ENCODE measurements at regions of chr9 and their contacts with region 1.

Region 1: GRCh38 chr9:27276193-27277030 is 20.5 kb downstream of the EQTN start:
- DNase-seq: peak; percentile 70
- H3K4me3 Mint-ChIP-seq: peak overlapping the region; percentile 2
- H3K27ac Mint-ChIP-seq: peak overlapping the region; percentile 57
- H3K4me1 Mint-ChIP-seq: peaks cover 10% of the 10 kb centered on the region
- H3K27me3 Mint-ChIP-seq: no peaks in the 10 kb centered on the region
- CTCF ChIP-seq: peak; percentile 60

Region 2: DNA sequence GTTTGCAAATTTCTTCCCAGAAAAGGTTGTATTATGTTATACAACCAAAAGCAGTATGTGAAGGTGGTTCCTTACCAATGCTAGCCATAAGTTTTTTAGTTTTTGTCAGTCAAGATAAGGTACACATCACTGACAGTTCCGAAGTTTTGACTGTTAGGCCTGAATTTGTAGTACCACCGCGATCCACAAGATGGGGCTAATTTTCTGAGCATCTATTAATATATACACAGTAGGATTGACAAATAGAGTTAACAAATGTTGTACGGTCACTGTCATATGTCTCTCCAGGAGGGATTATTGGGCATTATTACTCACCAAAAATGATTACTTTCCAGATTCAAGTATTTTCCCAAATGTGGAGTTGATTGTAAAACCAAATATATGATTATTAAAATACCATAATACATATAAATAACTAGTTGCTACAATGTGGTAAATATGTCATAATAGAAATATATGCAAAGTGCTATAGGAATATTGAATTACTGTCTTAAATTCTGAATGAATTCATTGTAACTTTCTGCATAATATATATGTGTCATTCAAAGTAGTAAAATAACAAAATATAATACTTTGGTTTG is 242.5 kb before region 1 on chr9:
- CTCF ChIA-PET with region 1: interaction called, 56 read pairs
- POLR2A ChIA-PET with region 1: no interaction called
- intact Hi-C with region 1: loop called (anchors 1 kb)
- DNase-seq: peak; percentile 71
- H3K4me3 Mint-ChIP-seq: no peak overlapping the region
- H3K27ac Mint-ChIP-seq: no peak overlapping the region
- H3K4me1 Mint-ChIP-seq: peaks cover 6% of the 10 kb centered on the region
- H3K27me3 Mint-ChIP-seq: no peaks in the 10 kb centered on the region
- CTCF ChIP-seq: peak; percentile 64

Region 3: DNA sequence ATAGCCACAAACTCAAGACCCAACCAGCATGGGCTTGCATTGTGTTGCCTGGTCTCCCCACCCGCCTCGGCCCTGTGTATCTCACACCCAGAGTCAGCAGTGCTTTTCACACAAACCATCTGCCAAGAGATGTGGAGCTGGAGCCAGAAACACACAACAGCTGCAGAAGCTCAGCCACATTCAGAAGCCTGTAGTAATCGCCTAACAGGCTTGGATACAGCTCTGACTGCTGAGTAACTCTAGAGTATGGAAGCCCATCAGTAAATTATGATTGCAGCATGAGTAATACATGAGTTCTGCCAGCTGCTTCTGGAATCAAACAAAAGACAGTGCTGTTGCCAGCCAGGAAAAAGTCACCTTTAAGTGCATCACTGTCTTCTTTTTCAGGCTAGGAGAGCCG is 151.4 kb before region 1 on chr9:
- CTCF ChIA-PET with region 1: interaction called, 3 read pairs
- POLR2A ChIA-PET with region 1: no interaction called
- intact Hi-C with region 1: loop called (anchors 10 kb)
- DNase-seq: peak; percentile 93
- H3K4me3 Mint-ChIP-seq: no peak overlapping the region
- H3K27ac Mint-ChIP-seq: peak overlapping the region; percentile 78
- H3K4me1 Mint-ChIP-seq: peaks cover 43% of the 10 kb centered on the region
- H3K27me3 Mint-ChIP-seq: no peaks in the 10 kb centered on the region
- CTCF ChIP-seq: no peak

Region 4: GRCh38 chr9:27194401-27195091 is 81.9 kb before region 1 on chr9:
- CTCF ChIA-PET with region 1: no interaction called
- POLR2A ChIA-PET with region 1: no interaction called
- intact Hi-C with region 1: loop called (anchors 1 kb)
- DNase-seq: peak; percentile 82
- H3K4me3 Mint-ChIP-seq: peak overlapping the region; percentile 13
- H3K27ac Mint-ChIP-seq: peak overlapping the region; percentile 84
- H3K4me1 Mint-ChIP-seq: peaks cover 36% of the 10 kb centered on the region
- H3K27me3 Mint-ChIP-seq: no peaks in the 10 kb centered on the region
- CTCF ChIP-seq: no peak

Region 5: DNA sequence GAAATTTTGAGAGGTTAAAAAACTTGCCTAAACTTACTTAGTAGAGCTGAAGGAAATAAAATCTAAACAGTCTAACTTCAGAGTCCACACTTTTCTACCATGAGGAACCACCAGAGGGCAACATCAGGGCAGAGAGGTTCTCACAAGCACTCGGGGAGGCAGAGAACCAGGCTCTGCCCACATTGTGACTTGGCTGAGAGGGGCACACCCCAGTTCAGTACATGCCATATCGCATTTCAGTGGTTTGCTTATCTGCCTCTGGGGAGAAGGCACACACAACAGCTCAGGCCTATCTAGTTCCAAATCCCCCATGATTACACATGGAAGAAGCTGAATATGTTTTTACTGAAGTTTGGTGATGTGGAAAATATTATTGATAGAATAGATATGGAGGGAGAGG is 28.7 kb before region 1 on chr9:
- CTCF ChIA-PET with region 1: interaction called, 14 read pairs
- POLR2A ChIA-PET with region 1: no interaction called
- intact Hi-C with region 1: loop called (anchors 1 kb)
- DNase-seq: peak; percentile 68
- H3K4me3 Mint-ChIP-seq: no peak overlapping the region
- H3K27ac Mint-ChIP-seq: peak overlapping the region; percentile 38
- H3K4me1 Mint-ChIP-seq: peaks cover 15% of the 10 kb centered on the region
- H3K27me3 Mint-ChIP-seq: no peaks in the 10 kb centered on the region
- CTCF ChIP-seq: peak; percentile 30

Region 6: DNA sequence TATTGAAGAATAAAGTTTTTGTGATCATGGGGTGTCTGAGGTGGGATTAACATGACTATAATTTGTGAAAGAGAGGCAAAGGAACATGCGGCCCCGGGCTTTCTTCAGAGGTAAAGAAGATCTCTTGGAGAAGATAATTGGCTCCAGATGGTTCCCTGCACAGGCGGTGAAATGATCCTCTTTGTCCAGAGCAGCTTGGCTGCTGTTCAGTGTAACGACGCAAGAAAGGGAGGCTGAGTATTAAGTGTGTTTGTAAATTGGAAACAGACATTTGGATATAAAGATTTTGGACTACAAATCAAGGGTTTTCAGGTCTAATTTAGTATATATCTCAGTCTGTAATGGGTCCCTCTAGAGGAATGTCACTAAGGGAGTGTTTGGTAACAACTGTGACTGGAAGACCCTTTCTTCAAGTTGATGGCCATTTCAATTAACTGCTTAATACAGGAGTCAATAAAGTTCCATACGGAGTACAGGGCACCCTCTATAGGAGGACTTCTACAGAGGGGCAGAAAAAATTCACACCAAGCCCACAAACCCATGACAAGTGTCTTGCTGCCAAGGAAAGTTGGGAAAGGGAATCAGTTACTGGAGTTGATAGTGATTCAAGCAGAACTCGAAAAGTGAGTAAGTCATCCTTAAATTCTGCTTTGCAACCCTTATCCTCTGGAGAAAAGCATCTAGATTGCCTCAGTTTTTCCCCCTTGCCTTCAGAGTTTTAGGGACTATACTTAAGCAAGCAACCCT is 16.4 kb after region 1 on chr9:
- CTCF ChIA-PET with region 1: interaction called, 14 read pairs
- POLR2A ChIA-PET with region 1: no interaction called
- intact Hi-C with region 1: no loop called
- DNase-seq: no peak
- H3K4me3 Mint-ChIP-seq: no peak overlapping the region
- H3K27ac Mint-ChIP-seq: peak overlapping the region; percentile 1
- H3K4me1 Mint-ChIP-seq: no peaks in the 10 kb centered on the region
- H3K27me3 Mint-ChIP-seq: peaks cover 11% of the 10 kb centered on the region
- CTCF ChIP-seq: no peak

Measured in MCF 10A (cell line).